Testis (tissue), 5 donors: ENCODE measurements at regions of chr10 and their contacts with region 1.

Region 1: GRCh38 chr10:119826771-119827170 is 45.9 kb downstream of the MCMBP start:
- DNase-seq: no peak
- H3K4me3 ChIP-seq: no peak overlapping the region
- H3K27ac ChIP-seq: no peak overlapping the region
- H3K4me1 ChIP-seq: no peaks in the 10 kb centered on the region
- H3K27me3 ChIP-seq: no peaks in the 10 kb centered on the region
- CTCF ChIP-seq: no peak
- POLR2A ChIP-seq: no peak

Region 2: DNA sequence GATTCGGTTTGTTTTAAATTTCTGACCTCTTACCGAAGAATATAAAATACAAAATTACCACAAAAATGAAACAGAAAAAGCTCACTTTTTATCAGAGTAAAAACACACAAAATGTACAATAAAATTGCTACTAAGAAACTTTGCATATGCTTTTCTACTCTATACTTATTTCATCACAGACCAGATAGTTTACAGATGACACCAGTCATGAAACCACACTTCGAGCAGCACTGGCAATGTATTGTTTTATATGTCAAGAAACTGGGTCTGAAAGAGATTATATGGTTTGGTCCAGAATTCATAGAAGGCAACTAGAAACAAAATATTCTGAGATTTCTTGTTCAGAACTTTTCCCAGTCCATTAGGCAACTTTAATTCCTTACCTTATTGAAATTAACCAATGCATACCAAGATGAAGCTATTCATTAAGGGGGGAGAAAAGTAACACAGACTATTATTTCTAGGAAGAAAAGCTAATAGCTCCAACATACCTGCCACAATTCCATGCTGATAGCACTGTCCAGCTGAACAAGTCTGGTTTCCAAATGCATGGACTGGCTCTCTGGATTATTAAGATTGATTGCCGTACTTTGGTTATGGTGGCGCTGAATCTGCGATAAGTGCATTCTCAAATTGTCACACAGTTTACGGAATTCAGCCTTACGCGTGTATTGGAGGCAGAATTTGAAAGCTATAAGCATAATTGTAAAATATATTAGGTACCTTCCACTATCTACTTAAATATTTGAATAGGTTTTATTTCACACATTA is 756.2 kb before region 1 on chr10:
- intact Hi-C with region 1: no loop called
- DNase-seq: no peak
- H3K4me3 ChIP-seq: no peak overlapping the region
- H3K27ac ChIP-seq: no peak overlapping the region
- H3K4me1 ChIP-seq: no peaks in the 10 kb centered on the region
- H3K27me3 ChIP-seq: no peaks in the 10 kb centered on the region
- CTCF ChIP-seq: no peak
- POLR2A ChIP-seq: no peak

Region 3: GRCh38 chr10:119908166-119908565 is 81.4 kb after region 1 on chr10:
- intact Hi-C with region 1: loop called (anchors 10 kb)
- DNase-seq: no peak
- H3K4me3 ChIP-seq: no peak overlapping the region
- H3K27ac ChIP-seq: no peak overlapping the region
- H3K4me1 ChIP-seq: no peaks in the 10 kb centered on the region
- H3K27me3 ChIP-seq: no peaks in the 10 kb centered on the region
- CTCF ChIP-seq: no peak
- POLR2A ChIP-seq: no peak